GM12878 (cell line): ENCODE measurements at regions of chr6 and their contacts with region 1.

Region 1: GRCh38 chr6:16286148-16286522 is 47.7 kb downstream of the GMPR start:
- DNase-seq: no peak
- ATAC-seq: peak; percentile 82
- H3K4me3 ChIP-seq: no peak overlapping the region
- H3K27ac ChIP-seq: no peak overlapping the region
- H3K4me1 ChIP-seq: no peaks in the 10 kb centered on the region
- H3K27me3 ChIP-seq: no peaks in the 10 kb centered on the region
- CTCF ChIP-seq: peak; percentile 79 to 95 (median 84)
- EP300 ChIP-seq: no peak
- POLR2A ChIP-seq: no peak
- RAD21 ChIP-seq: peak; percentile 90

Region 2: DNA sequence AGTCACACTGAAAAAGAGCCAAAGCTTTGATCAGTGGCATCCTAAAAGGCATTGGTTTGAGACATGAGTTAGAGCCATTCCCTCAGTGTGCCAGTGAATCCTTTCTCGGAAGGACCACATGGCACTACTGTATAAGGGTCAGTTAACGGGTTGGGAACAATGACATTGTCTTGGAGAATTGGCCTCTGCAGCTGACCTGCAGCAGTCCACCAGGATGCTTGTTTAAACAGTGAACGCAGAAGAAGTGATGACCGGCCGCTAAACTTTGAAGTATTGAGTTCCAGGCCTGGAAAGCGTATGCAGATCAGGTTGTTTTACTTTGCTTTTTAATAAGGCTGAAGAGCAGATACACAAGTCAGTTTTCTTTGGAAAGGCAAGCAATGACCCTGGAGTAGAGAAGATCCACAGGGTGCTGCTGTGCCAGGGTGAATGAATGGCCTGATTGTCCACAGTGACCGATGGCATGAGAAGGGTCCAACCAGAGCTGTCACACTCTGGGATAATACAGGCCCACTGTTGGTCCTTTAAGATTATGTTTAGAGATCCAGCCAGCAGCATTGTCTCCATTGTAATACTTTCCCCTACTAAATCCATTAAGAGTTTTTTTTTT is 10.0 kb after region 1 on chr6:
- CTCF ChIA-PET with region 1: interaction called, 71 read pairs
- POLR2A ChIA-PET with region 1: interaction called, 3 read pairs
- RAD21 ChIA-PET with region 1: interaction called, 10 read pairs
- SMC1A ChIA-PET with region 1: interaction called, 8 read pairs
- in situ Hi-C with region 1: no loop called
- intact Hi-C with region 1: no loop called
- DNase-seq: no peak
- ATAC-seq: no peak
- H3K4me3 ChIP-seq: no peak overlapping the region
- H3K27ac ChIP-seq: no peak overlapping the region
- H3K4me1 ChIP-seq: peaks cover 2% of the 10 kb centered on the region; the same call in 1 of the 2 replicates
- H3K27me3 ChIP-seq: no peaks in the 10 kb centered on the region
- CTCF ChIP-seq: no peak
- EP300 ChIP-seq: no peak
- POLR2A ChIP-seq: no peak
- RAD21 ChIP-seq: no peak

Region 3: DNA sequence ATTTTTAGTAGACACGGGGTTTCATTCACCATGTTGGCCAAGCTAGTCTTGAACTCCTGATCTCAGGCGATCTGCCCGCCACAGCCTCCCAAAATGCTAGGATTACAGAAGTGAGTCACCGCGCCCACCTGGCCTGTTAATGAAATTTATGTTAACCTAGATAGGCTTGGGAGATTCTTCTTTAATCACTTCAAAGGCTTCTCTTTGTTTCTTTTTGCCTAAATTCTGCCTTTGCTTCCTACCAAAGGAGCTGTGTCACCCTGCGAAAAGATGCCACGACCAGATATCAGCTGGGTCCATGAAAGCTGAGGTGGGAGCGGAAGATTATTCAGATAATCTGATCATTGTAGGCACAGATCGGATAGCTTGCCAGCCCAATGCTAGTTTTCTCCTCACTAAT is 27.6 kb after region 1 on chr6:
- CTCF ChIA-PET with region 1: interaction called, 15 read pairs
- POLR2A ChIA-PET with region 1: no interaction called
- RAD21 ChIA-PET with region 1: interaction called, 3 read pairs
- SMC1A ChIA-PET with region 1: interaction called, 3 read pairs
- in situ Hi-C with region 1: no loop called
- intact Hi-C with region 1: no loop called
- DNase-seq: no peak
- ATAC-seq: no peak
- H3K4me3 ChIP-seq: no peak overlapping the region
- H3K27ac ChIP-seq: no peak overlapping the region
- H3K4me1 ChIP-seq: peaks cover 3% of the 10 kb centered on the region; the same call in 1 of the 2 replicates
- H3K27me3 ChIP-seq: no peaks in the 10 kb centered on the region
- CTCF ChIP-seq: no peak
- EP300 ChIP-seq: no peak
- POLR2A ChIP-seq: no peak
- RAD21 ChIP-seq: no peak

Region 4: GRCh38 chr6:16770701-16771569 is 484.8 kb after region 1 on chr6:
- CTCF ChIA-PET with region 1: interaction called, 26 read pairs
- POLR2A ChIA-PET with region 1: no interaction called
- RAD21 ChIA-PET with region 1: interaction called, 13 read pairs
- SMC1A ChIA-PET with region 1: interaction called, 35 read pairs
- in situ Hi-C with region 1: no loop called
- intact Hi-C with region 1: no loop called
- DNase-seq: no peak
- ATAC-seq: peak; percentile 87
- H3K4me3 ChIP-seq: no peak overlapping the region
- H3K27ac ChIP-seq: no peak overlapping the region
- H3K4me1 ChIP-seq: no peaks in the 10 kb centered on the region; the same call in 1 of the 2 replicates
- H3K27me3 ChIP-seq: no peaks in the 10 kb centered on the region
- CTCF ChIP-seq: peak; percentile 89 to 98 (median 94)
- EP300 ChIP-seq: 0 out of 4 replicates have a peak, but pooled peaks of 1 of the 2 experiments have one; percentile 18
- POLR2A ChIP-seq: no peak
- RAD21 ChIP-seq: peak; percentile 72

Region 5: GRCh38 chr6:17086469-17086868 is 800.3 kb after region 1 on chr6:
- CTCF ChIA-PET with region 1: interaction called, 6 read pairs
- POLR2A ChIA-PET with region 1: no interaction called
- RAD21 ChIA-PET with region 1: interaction called, 6 read pairs
- SMC1A ChIA-PET with region 1: interaction called, 3 read pairs
- in situ Hi-C with region 1: loop called (anchors 10 kb)
- intact Hi-C with region 1: loop called (anchors 10 kb)
- DNase-seq: no peak
- ATAC-seq: peak; percentile 81
- H3K4me3 ChIP-seq: no peak overlapping the region
- H3K27ac ChIP-seq: no peak overlapping the region
- H3K4me1 ChIP-seq: no peaks in the 10 kb centered on the region
- H3K27me3 ChIP-seq: no peaks in the 10 kb centered on the region
- CTCF ChIP-seq: peak; percentile 46 to 56 (median 52)
- EP300 ChIP-seq: no peak
- POLR2A ChIP-seq: no peak
- RAD21 ChIP-seq: peak; percentile 63